OCI-LY7 (cell line): ENCODE measurements at regions of chr9 and their contacts with region 1.

Region 1: DNA sequence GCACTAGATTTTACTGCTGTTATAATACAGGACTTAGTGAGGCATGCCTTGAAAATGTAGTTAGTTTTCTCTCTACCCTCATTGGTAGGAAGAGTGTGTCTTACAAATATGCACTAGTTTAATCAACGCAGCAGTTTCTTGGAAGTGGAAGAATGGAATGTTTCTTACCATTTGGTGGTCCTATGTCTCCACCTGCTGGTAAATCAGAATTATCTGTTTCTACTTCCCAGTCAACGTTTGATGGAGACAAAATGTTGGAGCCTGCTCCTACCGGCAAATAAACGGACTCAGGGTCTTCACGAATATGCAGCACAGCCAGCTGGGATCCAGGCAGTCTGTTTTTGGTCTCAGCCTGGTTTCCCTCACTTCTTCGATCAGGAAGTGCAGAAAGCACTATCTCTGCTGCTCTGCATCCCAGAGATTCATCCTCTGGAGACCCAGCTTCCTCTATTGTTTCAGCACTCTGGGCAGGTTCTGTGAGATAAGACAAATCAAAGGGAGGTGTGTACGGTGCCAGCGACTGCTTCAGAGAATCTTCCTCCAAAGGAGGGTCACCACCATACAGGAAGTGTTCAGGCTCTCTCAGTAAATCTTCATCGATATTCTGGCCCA is 59.5 kb upstream of the PCA3 start:
- DNase-seq: peak; percentile 77
- H3K4me3 ChIP-seq: no peak overlapping the region
- H3K27ac ChIP-seq: no peak overlapping the region
- H3K4me1 ChIP-seq: no peaks in the 10 kb centered on the region
- CTCF ChIP-seq: peak; percentile 90

Region 2: DNA sequence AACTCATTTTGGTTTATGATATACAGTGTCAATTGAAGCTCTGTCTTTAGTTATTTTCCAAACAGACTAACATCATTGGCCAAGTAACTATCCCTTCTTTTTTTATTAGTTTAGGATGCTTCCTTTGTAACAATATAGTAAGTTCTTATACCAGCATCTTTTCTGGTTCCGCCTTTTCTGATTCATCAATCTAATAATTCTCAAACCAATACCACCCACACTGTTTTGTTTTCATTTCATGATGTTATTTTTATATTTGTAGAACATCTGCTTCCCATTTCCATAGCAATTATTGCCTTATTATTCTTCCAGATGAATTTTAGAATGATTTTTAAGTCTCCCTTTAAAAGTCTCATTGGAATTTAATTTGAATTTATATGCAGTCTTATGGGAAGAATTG is 528.5 kb before region 1 on chr9:
- CTCF ChIA-PET with region 1: no interaction called
- POLR2A ChIA-PET with region 1: no interaction called
- intact Hi-C with region 1: no loop called
- DNase-seq: no peak
- H3K4me3 ChIP-seq: no peak overlapping the region
- H3K27ac ChIP-seq: no peak overlapping the region
- H3K4me1 ChIP-seq: no peaks in the 10 kb centered on the region
- CTCF ChIP-seq: no peak

Region 3: DNA sequence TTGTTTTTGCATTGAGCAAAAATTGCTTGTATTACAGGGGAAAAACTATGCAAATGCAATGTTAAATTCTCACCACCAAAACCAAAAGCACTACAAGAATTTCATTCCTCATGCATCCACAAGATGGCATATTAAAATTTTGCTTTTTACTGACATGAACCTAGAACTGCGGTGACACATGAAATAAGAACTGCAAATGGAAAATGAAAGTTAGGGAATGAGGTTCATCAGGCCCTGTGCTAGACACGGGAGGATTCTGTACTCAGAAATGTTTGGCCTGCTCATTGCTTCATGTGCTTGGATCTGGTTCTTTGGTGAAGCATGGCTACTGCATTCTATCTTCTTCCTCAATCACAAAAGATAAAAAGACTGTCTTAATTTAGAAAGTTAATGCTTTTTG is 301.3 kb before region 1 on chr9:
- CTCF ChIA-PET with region 1: no interaction called
- POLR2A ChIA-PET with region 1: no interaction called
- intact Hi-C with region 1: loop called (anchors 2 kb)
- DNase-seq: peak; percentile 68
- H3K4me3 ChIP-seq: peak overlapping the region; percentile 6
- H3K27ac ChIP-seq: peak overlapping the region; percentile 23
- H3K4me1 ChIP-seq: peaks cover 46% of the 10 kb centered on the region
- CTCF ChIP-seq: peak; percentile 86

Region 4: GRCh38 chr9:76451234-76451633 is 253.5 kb before region 1 on chr9:
- CTCF ChIA-PET with region 1: no interaction called
- POLR2A ChIA-PET with region 1: interaction called, 4 read pairs
- intact Hi-C with region 1: loop called (anchors 1 kb)
- DNase-seq: no peak
- H3K4me3 ChIP-seq: no peak overlapping the region
- H3K27ac ChIP-seq: no peak overlapping the region
- H3K4me1 ChIP-seq: peaks cover 9% of the 10 kb centered on the region
- CTCF ChIP-seq: no peak